ENCODE measurements at regions of chr1 and their contacts with region 1.

Region 1: GRCh38 chr1:151198255-151199127 is at the start of gene PIP5K1A:
- DNase-seq: peak; percentile 99
- total RNA-seq, gene PIP5K1A: 40.6 TPM

Region 2: DNA sequence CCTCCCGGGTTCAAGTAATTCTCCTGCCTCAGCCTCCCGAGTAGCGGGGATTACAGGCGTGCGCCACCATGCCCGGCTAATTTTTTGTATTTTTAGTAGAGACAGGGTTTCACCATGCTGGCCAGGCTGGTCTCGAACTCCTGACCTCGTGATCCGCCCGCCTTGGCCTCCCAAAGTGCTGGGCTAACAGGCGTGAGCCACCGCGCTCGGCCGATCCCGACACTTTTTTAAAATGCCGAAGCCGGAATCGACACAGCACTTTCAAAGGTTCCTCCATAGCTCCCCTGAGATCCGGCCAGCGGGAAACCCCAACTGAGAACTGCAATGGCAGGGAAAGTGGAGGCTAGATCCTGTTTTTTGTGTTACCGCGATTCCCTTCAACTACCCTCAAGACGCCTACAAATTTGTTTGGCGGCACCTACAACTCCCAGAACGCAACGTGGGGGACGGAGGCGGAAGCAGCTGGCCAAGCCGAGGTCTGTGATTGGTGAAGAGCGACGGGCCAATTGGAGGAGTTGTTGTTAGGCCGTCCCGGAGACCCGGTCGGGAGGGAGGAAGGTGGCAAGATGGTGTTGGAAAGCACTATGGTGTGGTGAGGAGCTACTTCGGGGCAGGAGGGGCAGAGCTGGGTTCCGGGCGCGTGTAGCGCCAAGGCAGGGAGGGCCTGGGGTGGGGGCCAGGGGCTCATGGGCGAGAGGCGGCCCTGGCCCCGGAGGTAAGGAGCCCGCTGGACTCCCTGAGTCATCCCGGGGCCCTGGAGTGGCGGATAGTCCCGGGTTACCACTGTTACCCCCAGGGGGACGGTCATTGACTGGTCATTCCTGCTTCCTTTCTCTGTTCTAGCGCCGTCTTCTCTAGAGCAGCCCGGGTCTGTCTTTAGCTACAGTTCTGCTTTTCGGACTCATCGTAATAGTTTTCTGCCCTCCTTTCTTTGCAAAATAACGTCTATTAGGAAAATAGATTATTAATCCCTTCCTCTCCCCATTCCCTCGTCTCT is 56.0 kb after region 1 on chr1 and contains the start of gene PSMD4:
- intact Hi-C with region 1: loop called (anchors 1 kb)
- DNase-seq: peak; percentile 97
- total RNA-seq, gene PSMD4: 137 TPM

Region 3: DNA sequence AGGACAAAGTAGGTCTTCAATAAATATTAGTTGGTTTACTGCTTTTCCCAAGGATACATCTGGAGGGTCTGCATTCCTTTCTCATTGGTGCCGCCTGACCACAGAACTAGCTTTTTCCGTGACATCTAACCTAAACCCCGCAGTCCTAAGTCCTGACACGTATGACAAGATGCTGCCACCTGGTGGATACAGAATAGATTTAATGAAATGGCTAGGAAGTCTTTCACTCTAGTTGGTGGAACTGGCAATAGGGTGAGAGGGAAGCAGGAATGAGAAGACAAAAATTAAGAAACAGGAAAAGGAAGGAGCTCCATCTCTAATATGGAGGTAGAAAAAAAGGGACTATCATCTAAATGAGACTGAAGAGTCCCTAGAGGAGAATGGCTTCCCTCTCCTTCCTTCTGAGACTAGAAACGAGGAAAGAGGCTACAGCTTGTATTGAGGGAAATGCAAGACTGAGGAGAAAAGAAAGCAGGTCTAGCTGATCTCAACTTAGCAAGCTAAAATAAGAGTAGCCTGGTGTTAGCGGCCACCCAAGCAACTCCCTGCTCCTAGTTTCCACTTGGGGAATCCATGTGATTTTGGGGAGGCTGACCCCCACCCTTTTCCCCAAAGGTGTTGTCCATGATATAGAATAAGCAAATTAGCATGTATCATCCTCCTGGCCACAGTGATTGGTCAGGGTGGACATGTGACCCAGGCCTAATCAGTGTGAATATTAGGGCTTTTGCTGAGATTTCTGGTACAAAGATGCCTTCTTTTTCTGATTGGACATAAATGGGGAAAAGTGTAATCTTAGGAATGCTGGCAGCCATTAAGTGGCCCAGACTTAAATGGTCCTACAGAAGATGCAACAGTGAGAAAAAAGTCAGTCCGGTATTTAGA is 142.6 kb after region 1 on chr1:
- intact Hi-C with region 1: loop called (anchors 5 kb)
- DNase-seq: no peak

Measured in cardiac septum (tissue), 1 donor.